Caco-2 (cell line): ENCODE measurements at regions of chr12 and their contacts with region 1.

Region 1: DNA sequence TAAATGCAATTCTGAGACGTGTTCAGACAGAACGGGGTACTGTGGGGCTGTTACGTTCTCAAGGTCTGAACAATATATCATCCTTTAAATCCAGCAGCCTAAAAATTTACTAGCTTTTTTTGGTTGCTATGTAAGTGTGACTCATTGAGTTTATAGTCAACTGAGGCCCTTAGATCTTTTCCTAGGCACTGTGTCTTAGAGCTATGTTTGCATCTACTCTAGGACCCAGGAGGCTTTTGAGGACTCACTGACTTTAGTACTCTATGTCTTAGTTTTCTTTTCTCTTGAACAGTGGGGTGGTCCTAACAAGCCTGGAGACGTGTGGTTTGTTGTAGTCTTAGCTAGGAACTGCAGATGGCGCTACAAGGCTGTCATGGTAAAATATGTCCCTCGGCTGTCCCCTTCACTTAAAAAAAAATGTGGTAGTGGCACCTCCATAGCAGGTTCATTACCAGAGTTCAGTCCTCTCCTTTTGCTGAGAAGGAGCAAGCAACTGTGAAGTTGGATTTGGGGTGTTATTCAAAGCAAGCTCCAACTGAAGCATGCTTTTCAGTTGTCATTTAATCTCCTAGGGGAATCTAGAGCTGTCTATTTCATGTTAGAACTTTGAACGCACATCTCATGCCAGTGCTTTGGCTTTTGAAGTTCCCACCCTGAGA is 8.7 kb upstream of the SPATS2 start:
- DNase-seq: peak; percentile 77 to 80
- H3K4me3 ChIP-seq: no peak overlapping the region
- H3K4me3 Mint-ChIP-seq: no peak overlapping the region
- H3K27ac Mint-ChIP-seq: no peak overlapping the region
- H3K4me1 ChIP-seq: no peaks in the 10 kb centered on the region
- H3K4me1 Mint-ChIP-seq: peaks cover 9% of the 10 kb centered on the region
- H3K27me3 ChIP-seq: no peaks in the 10 kb centered on the region
- H3K27me3 Mint-ChIP-seq: no peaks in the 10 kb centered on the region
- CTCF ChIP-seq: peak; percentile 87 to 91

Region 2: GRCh38 chr12:49296034-49296835 is 62.4 kb before region 1 on chr12:
- CTCF ChIA-PET with region 1: interaction called, 12 read pairs
- POLR2A ChIA-PET with region 1: no interaction called
- intact Hi-C with region 1: no loop called
- DNase-seq: peak; percentile 74 to 88
- H3K4me3 ChIP-seq: peak overlapping the region; percentile 69
- H3K4me3 Mint-ChIP-seq: peak overlapping the region; percentile 79
- H3K27ac Mint-ChIP-seq: no peak overlapping the region
- H3K4me1 ChIP-seq: 0 out of 2 replicates have a peak, but pooled peaks cover 5% of the 10 kb centered on the region
- H3K4me1 Mint-ChIP-seq: peaks cover 14% of the 10 kb centered on the region
- H3K27me3 ChIP-seq: no peaks in the 10 kb centered on the region
- H3K27me3 Mint-ChIP-seq: no peaks in the 10 kb centered on the region
- CTCF ChIP-seq: peak; percentile 84 to 94

Region 3: GRCh38 chr12:49331380-49332222 is 27.0 kb before region 1 on chr12:
- CTCF ChIA-PET with region 1: interaction called, 117 read pairs
- POLR2A ChIA-PET with region 1: interaction called, 5 read pairs
- intact Hi-C with region 1: loop called (anchors 1 kb)
- DNase-seq: peak; percentile 84 to 86
- H3K4me3 ChIP-seq: no peak overlapping the region
- H3K4me3 Mint-ChIP-seq: peak overlapping the region; percentile 18
- H3K27ac Mint-ChIP-seq: peak overlapping the region; percentile 77
- H3K4me1 ChIP-seq: peaks cover 24% of the 10 kb centered on the region
- H3K4me1 Mint-ChIP-seq: peaks cover 24% of the 10 kb centered on the region
- H3K27me3 ChIP-seq: no peaks in the 10 kb centered on the region
- H3K27me3 Mint-ChIP-seq: no peaks in the 10 kb centered on the region
- CTCF ChIP-seq: peak; percentile 90 to 96

Region 4: GRCh38 chr12:49422114-49422513 is 63.5 kb after region 1 on chr12:
- CTCF ChIA-PET with region 1: interaction called, 10 read pairs
- POLR2A ChIA-PET with region 1: no interaction called
- intact Hi-C with region 1: no loop called
- DNase-seq: no peak
- H3K4me3 ChIP-seq: no peak overlapping the region
- H3K4me3 Mint-ChIP-seq: no peak overlapping the region
- H3K27ac Mint-ChIP-seq: peak overlapping the region; percentile 40
- H3K4me1 ChIP-seq: peaks cover 49% of the 10 kb centered on the region
- H3K4me1 Mint-ChIP-seq: peaks cover 36% of the 10 kb centered on the region
- H3K27me3 ChIP-seq: no peaks in the 10 kb centered on the region
- H3K27me3 Mint-ChIP-seq: no peaks in the 10 kb centered on the region
- CTCF ChIP-seq: no peak

Region 5: GRCh38 chr12:49538510-49539403 is 180.1 kb after region 1 on chr12 and contains the start of gene KCNH3:
- CTCF ChIA-PET with region 1: interaction called, 10 read pairs
- POLR2A ChIA-PET with region 1: no interaction called
- intact Hi-C with region 1: no loop called
- DNase-seq: peak; percentile 86
- H3K4me3 ChIP-seq: peak within 1 kb of the TSS; percentile 56
- H3K4me3 Mint-ChIP-seq: peak within 1 kb of the TSS; percentile 77
- H3K27ac Mint-ChIP-seq: no peak within 1 kb of the TSS
- H3K4me1 ChIP-seq: peaks cover 10% of the 10 kb centered on the region
- H3K4me1 Mint-ChIP-seq: no peaks in the 10 kb centered on the region
- H3K27me3 ChIP-seq: peaks cover 4% of the 10 kb centered on the region; the same call in 1 of the 2 replicates
- H3K27me3 Mint-ChIP-seq: peaks cover 10% of the 10 kb centered on the region
- CTCF ChIP-seq: no peak
- total RNA-seq, gene KCNH3: 0.16 and 0.27 TPM in 2 replicates

Region 6: DNA sequence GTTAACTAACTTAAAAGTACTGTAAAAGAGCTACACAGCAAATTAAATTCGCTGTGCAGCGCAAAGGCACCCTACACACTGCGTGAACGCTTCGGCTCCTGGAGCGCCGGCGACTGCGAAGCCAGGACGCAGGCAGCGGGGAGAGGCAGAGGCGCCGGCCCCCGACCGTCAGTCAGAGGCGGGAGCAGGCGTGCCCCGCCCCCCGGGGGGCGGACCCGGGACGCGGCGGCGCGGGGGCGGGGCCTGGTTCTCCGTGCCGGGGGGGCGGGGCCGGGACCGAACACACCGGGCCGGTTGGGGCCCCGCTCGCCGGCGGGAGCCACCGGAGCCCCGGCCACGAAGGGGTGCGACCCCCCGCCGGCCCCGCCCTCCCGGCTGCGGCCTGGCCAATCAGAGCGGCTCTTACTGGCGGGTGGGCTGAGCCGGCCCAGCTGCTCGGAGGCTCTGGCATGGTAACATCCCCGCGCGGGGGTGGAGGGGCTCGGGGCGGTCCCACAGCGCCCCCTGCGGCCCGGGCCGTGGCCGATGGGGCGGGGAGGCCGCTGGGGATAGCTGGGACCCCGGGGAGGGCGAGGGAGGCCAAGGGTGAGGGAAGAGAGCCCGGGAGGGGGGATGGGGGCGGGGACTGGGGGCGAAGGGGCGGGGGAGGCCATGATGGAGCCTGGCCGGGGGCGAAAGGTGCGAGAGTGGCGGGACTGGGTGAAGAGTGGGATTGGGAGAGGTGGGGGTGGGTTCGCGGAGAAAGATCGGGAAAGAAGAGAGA is 264.7 kb after region 1 on chr12 and contains the start of gene PRPF40B:
- CTCF ChIA-PET with region 1: no interaction called
- POLR2A ChIA-PET with region 1: no interaction called
- intact Hi-C with region 1: loop called (anchors 2 kb)
- DNase-seq: peak; percentile 95 to 99
- H3K4me3 ChIP-seq: peak within 1 kb of the TSS; percentile 66
- H3K4me3 Mint-ChIP-seq: peak within 1 kb of the TSS; percentile 82
- H3K27ac Mint-ChIP-seq: peak within 1 kb of the TSS; percentile 77
- H3K4me1 ChIP-seq: peaks cover 32% of the 10 kb centered on the region
- H3K4me1 Mint-ChIP-seq: peaks cover 29% of the 10 kb centered on the region
- H3K27me3 ChIP-seq: no peaks in the 10 kb centered on the region
- H3K27me3 Mint-ChIP-seq: no peaks in the 10 kb centered on the region
- CTCF ChIP-seq: peak; percentile 61 to 71
- total RNA-seq, gene PRPF40B: 33.3 and 33.4 TPM in 2 replicates